ENCODE measurements at regions of chr7 and their contacts with region 1.

Region 1: DNA sequence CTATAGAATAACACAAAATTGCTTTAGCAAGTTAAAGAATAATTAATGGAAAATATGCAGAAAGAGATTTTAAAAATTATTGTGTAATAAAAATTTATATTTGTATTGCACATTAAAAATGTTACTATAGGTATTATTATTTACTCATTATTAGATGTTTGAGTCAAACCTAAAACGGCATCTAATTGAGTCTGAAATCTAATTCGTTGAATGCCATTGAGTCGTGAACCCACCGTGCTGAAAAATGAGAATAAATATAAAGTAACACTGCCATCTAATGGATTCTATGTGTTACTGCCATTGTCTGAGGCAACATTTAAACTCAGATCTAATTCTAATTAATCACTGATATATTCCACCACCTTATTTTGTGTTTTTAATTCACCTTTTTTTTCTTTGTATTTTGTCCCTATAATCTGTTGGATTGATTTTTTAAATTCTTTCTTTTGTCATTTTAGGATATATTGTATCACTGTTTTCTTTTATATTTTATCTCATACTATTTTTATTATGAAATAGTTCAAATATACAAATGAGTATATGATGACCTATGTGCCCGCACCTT is 62.2 kb downstream of the SAMD9 start:
- DNase-seq: peak; percentile 24
- H3K4me3 ChIP-seq: no peak overlapping the region
- H3K27ac ChIP-seq: no peak overlapping the region
- H3K4me1 ChIP-seq: no peaks in the 10 kb centered on the region
- H3K27me3 ChIP-seq: no peaks in the 10 kb centered on the region
- CTCF ChIP-seq: peak; percentile 61 to 81

Region 2: GRCh38 chr7:92421676-92422435 is 633.8 kb before region 1 on chr7:
- CTCF ChIA-PET with region 1: no interaction called
- dilution Hi-C with region 1: no loop called
- in situ Hi-C with region 1: no loop called
- intact Hi-C with region 1: loop called (anchors 10 kb)
- DNase-seq: no peak
- H3K4me3 ChIP-seq: no peak overlapping the region
- H3K27ac ChIP-seq: no peak overlapping the region
- H3K4me1 ChIP-seq: no peaks in the 10 kb centered on the region
- H3K27me3 ChIP-seq: no peaks in the 10 kb centered on the region
- CTCF ChIP-seq: no peak

Region 3: GRCh38 chr7:92461027-92462003 is 594.3 kb before region 1 on chr7:
- CTCF ChIA-PET with region 1: no interaction called
- dilution Hi-C with region 1: no loop called
- in situ Hi-C with region 1: no loop called
- intact Hi-C with region 1: loop called (anchors 10 kb)
- DNase-seq: peak; percentile 9
- H3K4me3 ChIP-seq: no peak overlapping the region
- H3K27ac ChIP-seq: no peak overlapping the region
- H3K4me1 ChIP-seq: peaks cover 14% of the 10 kb centered on the region
- H3K27me3 ChIP-seq: no peaks in the 10 kb centered on the region
- CTCF ChIP-seq: peak; percentile 82

Region 4: GRCh38 chr7:92621026-92621540 is 434.5 kb before region 1 on chr7:
- CTCF ChIA-PET with region 1: no interaction called
- dilution Hi-C with region 1: no loop called
- in situ Hi-C with region 1: loop called (anchors 10 kb)
- intact Hi-C with region 1: loop called (anchors 1 kb)
- DNase-seq: peak; percentile 78
- H3K4me3 ChIP-seq: no peak overlapping the region
- H3K27ac ChIP-seq: peak overlapping the region; percentile 54
- H3K4me1 ChIP-seq: peaks cover 36% of the 10 kb centered on the region
- H3K27me3 ChIP-seq: no peaks in the 10 kb centered on the region
- CTCF ChIP-seq: peak; percentile 67 to 72

Region 5: DNA sequence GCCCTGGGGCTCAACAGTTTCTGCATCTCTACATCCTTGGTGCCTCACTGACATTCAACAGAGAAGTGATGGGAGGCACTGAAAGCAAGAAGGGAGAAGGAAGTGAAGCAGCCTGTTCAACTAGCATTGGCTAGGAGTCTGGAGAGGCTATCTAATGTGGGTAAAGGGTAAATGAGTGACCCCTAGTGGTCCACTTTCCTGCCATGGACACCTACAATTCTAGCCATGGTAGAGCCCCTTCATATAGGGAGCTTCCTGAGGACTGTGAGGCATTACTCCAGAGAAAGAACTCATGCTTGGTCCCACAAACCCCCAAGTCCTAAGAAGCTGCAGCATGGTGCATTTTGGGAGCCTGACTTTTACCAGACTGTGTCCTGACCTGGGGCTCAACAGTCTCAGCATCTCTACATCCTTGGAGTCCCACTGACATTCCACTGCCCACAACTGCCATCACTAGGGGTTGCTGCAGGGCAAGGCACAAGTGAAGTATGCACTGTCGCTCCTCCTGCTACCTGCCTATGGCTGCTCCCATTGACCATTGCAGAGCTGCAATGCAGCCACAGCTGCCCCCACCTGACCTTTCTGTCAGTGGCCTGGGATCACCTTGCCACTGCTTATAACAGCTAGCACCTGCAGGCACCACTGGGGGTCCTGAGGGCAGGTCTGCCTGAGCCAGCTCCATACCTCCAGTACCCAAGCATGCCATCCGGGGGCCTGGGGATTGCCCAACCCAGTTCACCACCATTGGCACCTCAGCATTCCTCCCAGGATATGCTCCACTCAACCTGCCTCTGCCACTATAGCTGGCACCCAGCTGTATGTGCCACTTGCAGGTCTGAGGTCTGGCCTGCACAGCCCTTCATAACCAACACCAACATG is 175.2 kb before region 1 on chr7:
- CTCF ChIA-PET with region 1: no interaction called
- dilution Hi-C with region 1: no loop called
- in situ Hi-C with region 1: no loop called
- intact Hi-C with region 1: loop called (anchors 1 kb)
- DNase-seq: peak; percentile 18
- H3K4me3 ChIP-seq: no peak overlapping the region
- H3K27ac ChIP-seq: no peak overlapping the region
- H3K4me1 ChIP-seq: peaks cover 9% of the 10 kb centered on the region
- H3K27me3 ChIP-seq: no peaks in the 10 kb centered on the region
- CTCF ChIP-seq: peak in 1 of 2 donors; percentile 14

Region 6: DNA sequence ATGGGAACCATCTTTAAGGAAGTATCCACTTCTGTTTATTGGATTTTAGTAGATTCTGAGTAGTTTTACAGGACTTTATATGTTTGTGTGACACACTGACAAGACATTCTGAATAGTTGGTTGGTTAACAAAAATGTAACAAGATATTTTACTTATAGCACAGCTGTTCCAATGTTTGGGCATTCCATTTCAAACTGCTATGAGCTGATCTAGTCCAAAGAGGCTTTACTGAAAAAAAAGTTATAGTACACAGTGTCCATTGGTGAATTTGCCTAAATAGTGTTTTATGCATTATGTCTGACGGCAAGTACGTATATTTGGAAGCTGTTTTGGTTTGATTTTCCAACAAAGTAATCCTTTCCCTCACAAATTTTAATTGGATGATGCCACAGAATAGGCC is 36.9 kb before region 1 on chr7:
- CTCF ChIA-PET with region 1: no interaction called
- dilution Hi-C with region 1: no loop called
- in situ Hi-C with region 1: no loop called
- intact Hi-C with region 1: no loop called
- DNase-seq: no peak
- H3K4me3 ChIP-seq: no peak overlapping the region
- H3K27ac ChIP-seq: no peak overlapping the region
- H3K4me1 ChIP-seq: no peaks in the 10 kb centered on the region
- H3K27me3 ChIP-seq: no peaks in the 10 kb centered on the region
- CTCF ChIP-seq: no peak

Region 7: DNA sequence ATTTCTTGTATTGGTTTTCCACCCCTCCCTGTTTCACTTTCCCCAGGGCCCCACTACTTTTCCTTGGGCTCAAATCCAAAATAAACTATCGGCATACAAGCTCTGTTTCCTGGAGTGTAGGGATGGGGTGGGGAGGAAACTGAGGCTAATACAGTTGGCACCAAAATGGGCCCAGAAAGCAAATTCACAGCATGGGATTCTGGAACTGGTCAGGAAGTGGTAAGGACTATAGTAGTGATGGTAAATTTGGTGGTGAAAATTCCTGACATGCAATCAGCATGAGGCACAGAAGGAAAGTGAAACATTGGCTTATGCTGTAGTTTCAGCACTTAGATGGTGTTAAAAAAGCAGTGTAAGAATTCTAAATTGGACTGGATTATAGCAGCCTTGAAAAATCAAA is 101.3 kb after region 1 on chr7:
- CTCF ChIA-PET with region 1: no interaction called
- dilution Hi-C with region 1: no loop called
- in situ Hi-C with region 1: no loop called
- intact Hi-C with region 1: no loop called
- DNase-seq: no peak
- H3K4me3 ChIP-seq: no peak overlapping the region
- H3K27ac ChIP-seq: no peak overlapping the region
- H3K4me1 ChIP-seq: no peaks in the 10 kb centered on the region
- H3K27me3 ChIP-seq: no peaks in the 10 kb centered on the region
- CTCF ChIP-seq: no peak

Region 8: GRCh38 chr7:93265220-93265619 is 209.6 kb after region 1 on chr7:
- CTCF ChIA-PET with region 1: no interaction called
- dilution Hi-C with region 1: no loop called
- in situ Hi-C with region 1: no loop called
- intact Hi-C with region 1: no loop called
- DNase-seq: no peak
- H3K4me3 ChIP-seq: no peak overlapping the region
- H3K27ac ChIP-seq: no peak overlapping the region
- H3K4me1 ChIP-seq: no peaks in the 10 kb centered on the region
- H3K27me3 ChIP-seq: no peaks in the 10 kb centered on the region
- CTCF ChIP-seq: no peak